ENCODE measurements at regions of chr10 and their contacts with region 1.

Region 1: GRCh38 chr10:123160311-123160980 is 6.2 kb downstream of the BUB3 start:
- DNase-seq: peak; percentile 62 to 77 (median 70)
- H3K4me3 ChIP-seq: peak overlapping the region in 1 of 2 donors; percentile 19
- H3K4me3 Mint-ChIP-seq: peak overlapping the region; percentile 2 to 80 (median 75)
- H3K27ac ChIP-seq: peak overlapping the region; percentile 44
- H3K27ac Mint-ChIP-seq: peak overlapping the region; percentile 72 to 94 (median 80)
- H3K4me1 ChIP-seq: peaks cover 71% of the 10 kb centered on the region
- H3K4me1 Mint-ChIP-seq: peaks cover 51 to 79% (median 64%) of the 10 kb centered on the region in 4 donors
- H3K27me3 ChIP-seq: no peaks in the 10 kb centered on the region
- H3K27me3 Mint-ChIP-seq: no peaks in the 10 kb centered on the region

Region 2: GRCh38 chr10:123241391-123242141 is 81.1 kb after region 1 on chr10:
- CTCF ChIA-PET with region 1: no interaction called
- POLR2A ChIA-PET with region 1: interaction called, 48 read pairs
- intact Hi-C with region 1: no loop called
- DNase-seq: peak; percentile 81 to 88 (median 85)
- H3K4me3 ChIP-seq: peak overlapping the region in 1 of 2 donors; percentile 39
- H3K4me3 Mint-ChIP-seq: peak overlapping the region; percentile 8 to 85 (median 71)
- H3K27ac ChIP-seq: peak overlapping the region; percentile 76
- H3K27ac Mint-ChIP-seq: peak overlapping the region; percentile 82 to 99 (median 97)
- H3K4me1 ChIP-seq: peaks cover 32% of the 10 kb centered on the region
- H3K4me1 Mint-ChIP-seq: peaks cover 21 to 39% (median 28%) of the 10 kb centered on the region in 4 donors
- H3K27me3 ChIP-seq: no peaks in the 10 kb centered on the region
- H3K27me3 Mint-ChIP-seq: no peaks in the 10 kb centered on the region